AG04450 (cell line): ENCODE measurements at regions of chr17 and their contacts with region 1.

Region 1: GRCh38 chr17:60315650-60316049 is 76.3 kb downstream of the USP32 start:
- DNase-seq: no peak
- H3K4me3 ChIP-seq: no peak overlapping the region
- H3K27ac ChIP-seq: no peak overlapping the region
- H3K27me3 ChIP-seq: no peaks in the 10 kb centered on the region
- CTCF ChIP-seq: no peak

Region 2: DNA sequence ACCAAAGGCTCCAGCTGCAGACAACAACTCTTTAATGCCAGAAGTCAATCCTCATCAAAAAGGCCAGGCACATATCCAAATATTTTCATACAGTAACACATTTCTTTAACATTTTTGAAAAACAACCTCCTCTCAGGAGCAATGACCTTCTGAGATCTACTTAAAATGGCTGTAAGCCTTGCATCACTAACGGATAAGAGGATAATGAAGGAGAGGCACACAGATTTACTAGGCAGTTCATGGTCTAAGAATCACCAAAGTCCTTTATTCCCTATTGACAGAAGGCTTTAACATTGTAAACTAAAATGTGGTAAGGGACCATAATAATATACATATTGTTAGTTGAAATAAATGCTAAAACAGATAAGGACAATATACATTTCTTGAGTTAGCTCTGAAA is 38.4 kb before region 1 on chr17:
- CTCF ChIA-PET with region 1: no interaction called
- POLR2A ChIA-PET with region 1: no interaction called
- DNase-seq: no peak
- H3K4me3 ChIP-seq: no peak overlapping the region
- H3K27ac ChIP-seq: no peak overlapping the region
- H3K27me3 ChIP-seq: no peaks in the 10 kb centered on the region
- CTCF ChIP-seq: no peak

Region 3: GRCh38 chr17:60327122-60327900 is 11.7 kb after region 1 on chr17:
- CTCF ChIA-PET with region 1: no interaction called
- POLR2A ChIA-PET with region 1: no interaction called
- DNase-seq: no peak
- H3K4me3 ChIP-seq: no peak overlapping the region
- H3K27ac ChIP-seq: no peak overlapping the region
- H3K27me3 ChIP-seq: no peaks in the 10 kb centered on the region
- CTCF ChIP-seq: no peak

Region 4: GRCh38 chr17:60363700-60364405 is 48.2 kb after region 1 on chr17:
- CTCF ChIA-PET with region 1: interaction called, 15 read pairs
- POLR2A ChIA-PET with region 1: no interaction called
- DNase-seq: no peak
- H3K4me3 ChIP-seq: no peak overlapping the region
- H3K27ac ChIP-seq: no peak overlapping the region
- H3K27me3 ChIP-seq: no peaks in the 10 kb centered on the region
- CTCF ChIP-seq: no peak

Region 5: GRCh38 chr17:60685437-60685836 is 369.8 kb after region 1 on chr17:
- CTCF ChIA-PET with region 1: no interaction called
- POLR2A ChIA-PET with region 1: no interaction called
- DNase-seq: no peak
- H3K4me3 ChIP-seq: no peak overlapping the region
- H3K27ac ChIP-seq: no peak overlapping the region
- H3K27me3 ChIP-seq: no peaks in the 10 kb centered on the region
- CTCF ChIP-seq: no peak